Mammary epithelial cell (primary cell): ENCODE measurements at regions of chr19 and their contacts with region 1.

Region 1: DNA sequence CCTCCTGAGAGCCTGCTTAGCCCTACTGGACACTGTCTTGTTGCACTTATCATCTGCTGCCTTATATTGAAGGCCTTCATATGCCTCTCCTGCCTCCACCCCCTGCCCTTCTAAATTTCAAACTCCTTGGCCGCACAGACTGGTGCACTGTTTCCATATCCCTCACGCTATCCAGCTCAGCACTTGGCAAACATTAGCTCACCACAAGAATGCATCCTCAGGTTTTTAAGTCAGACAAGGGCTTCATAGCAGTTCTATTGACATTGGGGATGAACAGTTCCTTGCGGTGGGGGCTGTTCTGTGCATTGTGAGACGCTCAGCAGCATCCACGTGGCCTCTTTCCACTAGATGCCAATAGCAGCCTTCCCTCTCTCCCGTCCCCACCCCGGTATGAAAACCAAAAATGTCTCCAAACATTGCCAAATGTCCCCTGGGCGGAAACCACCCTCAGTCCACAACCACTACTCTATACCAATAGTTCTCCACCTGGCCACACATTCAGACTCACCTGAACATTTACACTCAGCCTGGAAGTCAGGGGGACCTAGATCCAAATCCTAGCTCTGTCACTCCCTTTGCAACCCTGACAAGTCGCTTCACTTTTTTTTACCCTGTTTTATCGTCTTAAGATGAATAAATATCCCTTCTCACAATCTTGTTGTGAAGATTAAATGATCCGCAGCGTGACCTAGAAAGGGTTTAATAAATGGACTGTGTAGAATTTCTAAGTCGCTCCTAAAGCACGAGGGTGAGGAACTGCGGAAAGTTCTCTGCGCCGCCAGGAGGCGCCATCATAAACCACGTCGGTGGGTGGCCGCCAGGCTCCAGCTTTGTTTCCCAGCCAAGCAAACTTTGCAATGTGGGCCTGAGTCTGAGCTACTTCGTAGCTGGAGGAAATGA is 3.6 kb upstream of the CEACAM3 start:
- DNase-seq: peak; percentile 35
- H3K4me3 ChIP-seq: no peak overlapping the region
- H3K27ac ChIP-seq: no peak overlapping the region
- H3K4me1 ChIP-seq: no peaks in the 10 kb centered on the region
- H3K27me3 ChIP-seq: peaks cover 2% of the 10 kb centered on the region
- CTCF ChIP-seq: peak; percentile 62 to 73

Region 2: DNA sequence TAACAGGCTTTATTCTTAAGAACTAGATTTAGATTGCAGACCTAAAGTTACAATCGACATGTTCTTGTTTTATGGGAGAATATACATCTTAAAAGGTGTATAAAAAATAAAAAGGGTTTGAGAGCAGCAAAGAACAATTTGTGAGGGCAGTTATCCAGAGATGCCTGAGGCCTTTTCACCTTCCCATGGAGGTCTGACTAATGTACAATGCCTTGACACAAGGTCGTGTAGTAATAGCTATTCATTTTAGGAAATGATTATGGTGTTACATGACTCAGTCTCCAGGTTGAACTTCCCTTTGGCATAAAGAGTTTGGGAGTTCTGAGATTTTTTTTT is 17.4 kb before region 1 on chr19:
- CTCF ChIA-PET with region 1: interaction called, 18 read pairs
- dilution Hi-C with region 1: no loop called
- in situ Hi-C with region 1: no loop called
- intact Hi-C with region 1: no loop called
- DNase-seq: peak; percentile 78
- H3K4me3 ChIP-seq: no peak overlapping the region
- H3K27ac ChIP-seq: no peak overlapping the region
- H3K4me1 ChIP-seq: peaks cover 26% of the 10 kb centered on the region
- H3K27me3 ChIP-seq: peaks cover 4% of the 10 kb centered on the region
- CTCF ChIP-seq: no peak

Region 3: DNA sequence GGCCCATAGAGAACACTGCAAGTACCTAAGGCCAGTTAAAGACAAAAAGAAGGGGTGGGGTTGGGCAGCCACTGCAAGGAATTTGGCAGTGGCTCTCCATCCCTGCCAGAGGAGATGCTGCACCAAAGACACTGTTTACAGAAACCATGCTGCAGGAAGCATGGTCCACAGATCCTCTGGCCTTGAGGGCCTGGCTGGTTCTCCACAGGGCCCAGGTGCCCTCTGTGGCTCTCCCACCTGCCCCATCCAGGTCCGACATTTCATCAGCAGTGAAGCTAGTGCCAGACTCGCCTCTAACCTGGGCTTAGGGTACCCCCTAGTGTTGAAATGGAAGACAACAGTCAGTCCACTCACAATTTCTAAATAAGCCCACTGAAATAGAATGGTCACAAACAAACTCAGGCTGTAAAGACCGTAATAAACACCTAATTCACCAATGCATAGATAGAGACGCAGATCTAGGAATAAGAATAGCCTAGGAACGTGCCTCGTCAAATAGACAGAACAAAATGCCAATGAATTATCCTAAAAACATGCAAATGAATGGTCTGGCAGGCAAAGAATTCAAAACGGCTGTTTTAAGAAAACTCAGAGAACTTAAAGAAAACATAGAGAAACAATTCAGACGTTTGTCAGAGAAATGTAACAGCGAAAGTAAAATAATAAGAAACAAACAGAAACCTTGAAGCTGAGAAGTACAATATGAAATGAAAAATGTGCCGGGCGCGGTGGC is 28.4 kb after region 1 on chr19:
- CTCF ChIA-PET with region 1: interaction called, 5 read pairs
- dilution Hi-C with region 1: no loop called
- in situ Hi-C with region 1: no loop called
- intact Hi-C with region 1: loop called (anchors 1 kb)
- DNase-seq: peak; percentile 19
- H3K4me3 ChIP-seq: no peak overlapping the region
- H3K27ac ChIP-seq: no peak overlapping the region
- H3K4me1 ChIP-seq: no peaks in the 10 kb centered on the region
- H3K27me3 ChIP-seq: no peaks in the 10 kb centered on the region
- CTCF ChIP-seq: peak; percentile 55 to 69

Region 4: DNA sequence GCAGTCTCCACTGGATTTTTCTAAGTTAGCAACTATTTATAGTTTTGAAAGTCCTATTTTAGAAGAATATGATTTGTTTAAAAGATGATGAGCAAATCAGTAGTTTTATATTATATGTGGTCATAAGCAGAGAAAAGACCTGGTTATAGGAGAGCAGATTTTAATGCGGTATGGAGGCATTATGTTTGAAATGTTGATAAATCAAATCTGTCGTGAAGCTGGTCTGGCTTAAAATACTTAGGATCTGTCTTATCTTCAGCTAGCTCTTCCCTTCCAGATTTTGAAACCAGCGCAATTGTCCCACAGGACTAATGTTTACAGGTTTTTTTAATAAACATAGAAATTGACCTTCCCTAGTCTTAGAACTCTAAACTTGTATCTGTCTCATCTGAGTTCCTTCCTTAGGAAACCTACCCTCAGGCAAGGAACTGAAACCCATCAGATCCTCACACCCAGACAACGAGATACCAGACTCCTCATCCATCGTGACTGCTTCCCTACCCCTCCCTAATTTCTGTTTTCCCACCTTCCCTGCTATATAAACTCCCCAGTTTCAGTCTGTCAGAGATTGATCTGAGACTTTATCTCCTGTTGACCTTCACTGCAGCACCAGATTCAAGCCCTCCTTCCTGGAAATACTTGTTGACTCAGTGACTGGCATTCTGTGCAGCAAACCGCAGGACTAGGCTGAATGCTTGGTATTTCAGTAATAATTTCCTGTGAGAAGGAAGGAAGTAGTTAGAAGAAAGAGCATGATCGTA is 687.8 kb after region 1 on chr19:
- CTCF ChIA-PET with region 1: no interaction called
- dilution Hi-C with region 1: no loop called
- in situ Hi-C with region 1: no loop called
- intact Hi-C with region 1: no loop called
- DNase-seq: no peak
- H3K4me3 ChIP-seq: no peak overlapping the region
- H3K27ac ChIP-seq: no peak overlapping the region
- H3K4me1 ChIP-seq: peaks cover 4% of the 10 kb centered on the region
- H3K27me3 ChIP-seq: no peaks in the 10 kb centered on the region
- CTCF ChIP-seq: no peak